CD14-positive monocyte (primary cell): ENCODE measurements at regions of chr12 and their contacts with region 1.

Region 1: GRCh38 chr12:64696080-64696741 is 63.0 kb downstream of the GNS start:
- DNase-seq: no peak
- H3K4me3 ChIP-seq: no peak overlapping the region
- H3K4me3 Mint-ChIP-seq: no peak overlapping the region
- H3K27ac ChIP-seq: peak overlapping the region in 1 of 2 donors; percentile 37
- H3K27ac Mint-ChIP-seq: peak overlapping the region in 4 of 7 donors; percentile 33 to 72 (median 44)
- H3K4me1 ChIP-seq: peaks cover 24 to 32% of the 10 kb centered on the region in 2 donors
- H3K4me1 Mint-ChIP-seq: peaks cover 27% of the 10 kb centered on the region
- H3K27me3 ChIP-seq: no peaks in the 10 kb centered on the region
- H3K27me3 Mint-ChIP-seq: peaks cover 0 to 2% (median 0%) of the 10 kb centered on the region in 3 donors
- CTCF ChIP-seq: peak; percentile 37

Region 2: DNA sequence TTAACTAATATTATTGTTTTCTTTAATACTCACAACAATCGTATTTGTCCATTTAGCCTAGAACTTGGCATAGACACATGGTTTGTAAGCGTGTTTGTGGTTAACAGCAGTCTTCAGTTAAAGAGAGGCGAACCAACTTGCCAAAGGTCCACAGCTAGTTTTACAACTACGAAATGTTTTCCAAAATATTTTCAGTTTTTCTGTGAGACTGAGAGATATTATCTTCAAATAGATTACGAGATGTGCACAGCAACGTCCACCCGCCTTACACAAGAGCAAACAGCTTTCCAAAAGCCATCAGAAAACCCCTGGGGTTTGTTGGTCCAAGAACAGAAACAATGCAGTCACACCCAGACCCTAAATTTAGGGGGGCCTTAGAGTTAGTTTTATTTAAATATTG is 144.5 kb before region 1 on chr12:
- intact Hi-C with region 1: loop called (anchors 1 to 5 kb)
- DNase-seq: no peak
- H3K4me3 ChIP-seq: no peak overlapping the region
- H3K4me3 Mint-ChIP-seq: no peak overlapping the region
- H3K27ac ChIP-seq: no peak overlapping the region
- H3K27ac Mint-ChIP-seq: no peak overlapping the region
- H3K4me1 ChIP-seq: peaks cover 0 to 6% of the 10 kb centered on the region in 2 donors
- H3K4me1 Mint-ChIP-seq: peaks cover 7% of the 10 kb centered on the region
- H3K27me3 ChIP-seq: no peaks in the 10 kb centered on the region
- H3K27me3 Mint-ChIP-seq: peaks cover 7 to 8% (median 7%) of the 10 kb centered on the region in 3 donors
- CTCF ChIP-seq: no peak

Region 3: GRCh38 chr12:64625243-64626077 is 70.8 kb before region 1 on chr12:
- intact Hi-C with region 1: loop called in 1 of 2 experiments (anchors 5 kb)
- DNase-seq: peak; percentile 95 to 99 (median 95)
- H3K4me3 ChIP-seq: peak overlapping the region; percentile 13 to 59 (median 39)
- H3K4me3 Mint-ChIP-seq: peak overlapping the region; percentile 72 to 78
- H3K27ac ChIP-seq: peak overlapping the region; percentile 96 to 97
- H3K27ac Mint-ChIP-seq: peak overlapping the region; percentile 97 to 99 (median 99)
- H3K4me1 ChIP-seq: peaks cover 79 to 81% of the 10 kb centered on the region in 2 donors
- H3K4me1 Mint-ChIP-seq: peaks cover 73% of the 10 kb centered on the region
- H3K27me3 ChIP-seq: no peaks in the 10 kb centered on the region
- H3K27me3 Mint-ChIP-seq: peaks cover 0 to 2% (median 0%) of the 10 kb centered on the region in 3 donors
- CTCF ChIP-seq: no peak

Region 4: DNA sequence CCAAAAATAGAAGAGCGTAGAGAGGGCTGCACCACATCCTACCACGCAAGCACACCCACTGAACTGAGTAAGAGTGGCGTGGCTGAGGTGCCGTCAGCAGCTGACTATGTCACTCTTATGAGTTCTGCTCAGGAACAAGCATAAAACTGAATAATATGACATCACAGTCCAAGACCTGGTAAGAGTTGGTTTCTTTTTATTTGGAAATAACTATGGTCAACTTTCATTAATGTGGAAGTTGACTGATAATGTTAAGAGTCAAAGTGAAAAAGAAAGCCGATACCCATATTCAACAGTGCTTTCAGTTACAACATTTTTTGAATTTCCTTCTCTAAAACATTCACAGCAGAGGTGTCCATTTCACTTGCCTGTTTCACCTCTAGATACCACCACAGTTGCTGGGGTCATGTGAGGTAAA is 18.3 kb after region 1 on chr12:
- intact Hi-C with region 1: loop called in 1 of 2 experiments (anchors 2 kb)
- DNase-seq: peak; percentile 80 to 90 (median 83)
- H3K4me3 ChIP-seq: peak overlapping the region in 1 of 3 experiments; percentile 33
- H3K4me3 Mint-ChIP-seq: peak overlapping the region in 1 of 2 donors; percentile 35
- H3K27ac ChIP-seq: peak overlapping the region; percentile 72 to 88
- H3K27ac Mint-ChIP-seq: peak overlapping the region; percentile 85 to 95 (median 91)
- H3K4me1 ChIP-seq: peaks cover 44 to 47% of the 10 kb centered on the region in 2 donors
- H3K4me1 Mint-ChIP-seq: peaks cover 46% of the 10 kb centered on the region
- H3K27me3 ChIP-seq: no peaks in the 10 kb centered on the region
- H3K27me3 Mint-ChIP-seq: no peaks in the 10 kb centered on the region
- CTCF ChIP-seq: no peak

Region 5: DNA sequence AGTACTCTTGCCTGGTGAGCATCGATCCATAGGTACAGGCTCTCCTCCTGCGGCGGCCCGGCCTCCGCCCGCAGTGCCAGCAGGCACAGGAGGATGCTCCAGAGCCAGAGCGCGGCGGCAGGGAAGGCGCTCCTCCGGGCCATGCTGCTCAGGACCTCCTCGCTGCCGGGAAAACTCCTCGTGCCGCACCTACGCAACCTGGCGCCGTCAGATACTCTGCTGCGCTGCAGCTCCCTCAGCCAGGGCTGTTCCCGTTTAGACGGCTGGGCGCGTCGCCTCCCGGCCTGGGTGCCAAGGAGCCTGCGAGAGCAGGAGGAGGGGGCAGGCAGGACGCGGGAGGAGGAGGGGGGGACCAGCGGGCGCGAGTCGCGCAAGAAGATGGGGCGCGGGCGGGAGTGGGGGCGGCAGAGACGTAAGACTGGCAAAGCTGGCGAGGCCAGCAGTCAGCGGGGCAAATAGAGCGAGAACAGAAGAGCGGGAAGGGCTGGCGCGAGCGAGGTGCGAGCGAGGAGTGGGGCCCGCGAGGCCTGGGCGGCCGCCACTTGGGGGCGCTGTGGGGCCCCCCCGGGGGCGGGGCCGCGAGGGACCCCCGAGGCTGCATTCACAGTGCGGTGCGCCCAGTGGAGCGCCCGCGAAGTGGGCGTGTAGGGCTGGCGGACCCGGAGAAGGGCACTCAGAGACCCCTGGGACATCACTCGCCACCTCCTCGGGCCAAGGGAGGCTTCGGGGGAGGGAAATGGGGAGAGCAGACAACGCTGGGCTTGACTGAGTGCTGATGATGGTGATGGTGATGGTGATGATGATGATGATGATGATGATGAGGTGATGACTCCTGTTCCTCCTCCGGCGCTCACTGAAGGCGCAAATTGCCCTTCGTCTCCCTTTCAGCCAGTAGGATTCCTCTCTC is 425.1 kb after region 1 on chr12 and contains the start of gene WIF1:
- intact Hi-C with region 1: no loop called
- DNase-seq: peak in 1 of 3 donors; percentile 16
- H3K4me3 ChIP-seq: peak within 1 kb of the TSS in 1 of 3 experiments; percentile 15
- H3K4me3 Mint-ChIP-seq: peak within 1 kb of the TSS in 1 of 2 donors; percentile 83
- H3K27ac ChIP-seq: no peak within 1 kb of the TSS
- H3K27ac Mint-ChIP-seq: no peak within 1 kb of the TSS
- H3K4me1 ChIP-seq: peaks cover 9 to 14% of the 10 kb centered on the region in 2 donors
- H3K4me1 Mint-ChIP-seq: peaks cover 14% of the 10 kb centered on the region
- H3K27me3 ChIP-seq: peaks cover 35 to 51% of the 10 kb centered on the region in 2 donors
- H3K27me3 Mint-ChIP-seq: peaks cover 43 to 44% (median 43%) of the 10 kb centered on the region in 3 donors
- CTCF ChIP-seq: peak; percentile 36
- polyA plus RNA-seq, gene WIF1: not detected